Naive thymus-derived CD4-positive, alpha-beta T cell (primary cell): ENCODE measurements at regions of chr1 and their contacts with region 1.

Region 1: GRCh38 chr1:183471743-183472487 is 384 bp upstream of the SMG7 start:
- DNase-seq: peak; percentile 90 to 99 (median 96)
- ATAC-seq: peak; percentile 82
- H3K4me3 ChIP-seq: peak overlapping the region; percentile 74
- H3K4me3 Mint-ChIP-seq: peak overlapping the region; percentile 94 to 100 (median 98)
- H3K27ac ChIP-seq: peak overlapping the region; percentile 90
- H3K27ac Mint-ChIP-seq: peak overlapping the region in 8 of 9 donors; percentile 97 to 100 (median 99)
- H3K4me1 ChIP-seq: peaks cover 17 to 34% of the 10 kb centered on the region in 2 donors
- H3K4me1 Mint-ChIP-seq: peaks cover 3 to 32% (median 14%) of the 10 kb centered on the region in 7 donors
- H3K27me3 ChIP-seq: no peaks in the 10 kb centered on the region
- H3K27me3 Mint-ChIP-seq: peaks cover 0 to 7% (median 0%) of the 10 kb centered on the region in 5 donors

Region 2: GRCh38 chr1:182391362-182392044 is 1080.4 kb before region 1 on chr1 and contains the start of gene GLUL:
- CTCF ChIA-PET with region 1: no interaction called
- POLR2A ChIA-PET with region 1: no interaction called
- intact Hi-C with region 1: loop called in 1 of 2 experiments (anchors 5 kb)
- DNase-seq: peak; percentile 46 to 83 (median 63)
- ATAC-seq: peak; percentile 87
- H3K4me3 ChIP-seq: peak within 1 kb of the TSS; percentile 73
- H3K4me3 Mint-ChIP-seq: peak within 1 kb of the TSS; percentile 87 to 98 (median 94)
- H3K27ac ChIP-seq: peak within 1 kb of the TSS; percentile 64
- H3K27ac Mint-ChIP-seq: peak within 1 kb of the TSS; percentile 82 to 97 (median 89)
- H3K4me1 ChIP-seq: peaks cover 10 to 14% of the 10 kb centered on the region in 2 donors
- H3K4me1 Mint-ChIP-seq: peaks cover 17 to 45% (median 29%) of the 10 kb centered on the region in 7 donors
- H3K27me3 ChIP-seq: no peaks in the 10 kb centered on the region
- H3K27me3 Mint-ChIP-seq: peaks cover 0 to 25% (median 0%) of the 10 kb centered on the region in 5 donors
- total RNA-seq, gene GLUL: 66.2 to 357 (median 112) TPM

Region 3: GRCh38 chr1:182789138-182790076 is 682.5 kb before region 1 on chr1 and contains the start of gene NPL:
- CTCF ChIA-PET with region 1: no interaction called
- POLR2A ChIA-PET with region 1: no interaction called
- intact Hi-C with region 1: loop called in 1 of 2 experiments (anchors 1 kb)
- DNase-seq: peak; percentile 78 to 88 (median 86)
- ATAC-seq: peak; percentile 97
- H3K4me3 ChIP-seq: peak within 1 kb of the TSS; percentile 94
- H3K4me3 Mint-ChIP-seq: peak within 1 kb of the TSS; percentile 88 to 96 (median 94)
- H3K27ac ChIP-seq: peak within 1 kb of the TSS; percentile 68
- H3K27ac Mint-ChIP-seq: peak within 1 kb of the TSS; percentile 45 to 94 (median 87)
- H3K4me1 ChIP-seq: peaks cover 8 to 13% of the 10 kb centered on the region in 2 donors
- H3K4me1 Mint-ChIP-seq: peaks cover 8 to 18% (median 15%) of the 10 kb centered on the region in 7 donors
- H3K27me3 ChIP-seq: no peaks in the 10 kb centered on the region
- H3K27me3 Mint-ChIP-seq: peaks cover 0 to 38% (median 0%) of the 10 kb centered on the region in 5 donors
- total RNA-seq, gene NPL: 3.0 to 20.8 (median 9.9) TPM

Region 4: DNA sequence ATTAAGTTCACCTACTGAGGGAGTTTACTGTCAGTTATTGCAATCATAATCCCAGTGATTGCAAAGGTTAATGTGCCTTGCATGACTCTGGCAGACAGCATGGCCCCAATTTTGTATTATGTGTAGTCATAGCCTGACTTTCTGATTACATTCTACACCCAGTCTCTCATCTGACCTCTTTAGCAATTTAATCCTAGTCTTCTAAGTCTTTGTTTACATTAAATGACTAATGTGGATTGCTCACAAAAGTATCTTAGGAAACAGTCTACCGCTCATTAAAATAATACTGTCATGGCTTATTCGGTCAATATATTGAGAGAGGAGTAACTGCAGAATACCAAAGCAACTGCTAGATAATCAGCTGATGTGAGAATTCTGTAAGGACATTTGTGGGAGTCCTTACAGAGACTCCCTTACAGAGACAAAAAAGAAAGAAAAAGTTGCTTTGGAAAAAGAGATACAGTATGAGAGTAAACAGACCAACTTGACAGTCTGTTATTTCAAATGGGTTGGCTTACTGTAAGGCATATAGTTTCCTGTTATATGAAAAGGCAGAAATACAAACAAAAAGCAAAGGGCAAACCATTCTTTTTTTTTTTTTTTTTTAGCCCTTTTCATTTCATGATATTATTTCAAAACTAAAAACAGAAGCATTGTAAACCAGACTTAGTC is 43.2 kb after region 1 on chr1:
- CTCF ChIA-PET with region 1: interaction called, 3 read pairs
- POLR2A ChIA-PET with region 1: no interaction called
- intact Hi-C with region 1: loop called in 1 of 2 experiments (anchors 1 kb)
- DNase-seq: no peak
- ATAC-seq: no peak
- H3K4me3 ChIP-seq: no peak overlapping the region
- H3K4me3 Mint-ChIP-seq: no peak overlapping the region
- H3K27ac ChIP-seq: no peak overlapping the region
- H3K27ac Mint-ChIP-seq: peak overlapping the region in 4 of 9 donors; percentile 7 to 59 (median 30)
- H3K4me1 ChIP-seq: no peaks in the 10 kb centered on the region
- H3K4me1 Mint-ChIP-seq: peaks cover 12 to 31% (median 14%) of the 10 kb centered on the region in 7 donors
- H3K27me3 ChIP-seq: no peaks in the 10 kb centered on the region
- H3K27me3 Mint-ChIP-seq: no peaks in the 10 kb centered on the region

Region 5: DNA sequence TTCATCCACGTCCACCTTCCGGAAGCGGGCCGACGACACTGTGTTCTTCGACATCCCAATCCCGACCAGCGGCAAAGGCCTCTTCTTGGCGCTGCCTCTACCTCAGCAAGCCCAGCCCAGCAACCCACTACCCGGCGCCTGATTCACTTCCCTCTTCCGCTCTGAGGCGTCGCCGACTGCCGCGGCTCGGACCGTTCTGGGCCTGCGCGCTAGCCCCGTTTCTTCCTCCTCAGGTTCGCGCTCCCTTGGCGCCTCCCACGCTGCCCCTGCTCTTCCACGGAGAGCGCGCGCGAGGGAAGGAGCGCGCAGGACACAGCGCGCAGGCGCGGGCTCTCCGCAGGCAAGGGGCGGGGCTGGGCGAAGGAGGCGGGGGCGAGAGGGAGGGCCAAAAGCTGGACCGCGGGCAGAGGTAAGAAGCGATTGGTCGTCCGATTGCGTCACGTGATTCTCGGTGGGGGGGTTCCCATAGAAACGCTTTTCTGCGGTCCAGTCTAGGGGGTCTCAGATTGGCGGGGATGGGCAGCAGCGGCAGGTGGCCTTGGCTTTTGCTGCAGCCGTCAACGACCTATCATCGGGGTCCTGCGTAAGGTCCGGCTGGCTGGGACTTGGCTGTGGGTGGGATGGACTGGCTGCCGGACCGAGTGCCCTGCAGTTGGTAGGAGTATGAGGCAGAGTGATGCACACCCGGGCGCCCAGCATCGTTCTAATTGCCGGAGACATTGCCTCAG is 163.9 kb after region 1 on chr1 and contains the start of gene ARPC5:
- CTCF ChIA-PET with region 1: interaction called, 5 read pairs
- POLR2A ChIA-PET with region 1: interaction called, 10 read pairs
- intact Hi-C with region 1: loop called (anchors 1 kb)
- DNase-seq: peak; percentile 90 to 98 (median 92)
- ATAC-seq: peak; percentile 92
- H3K4me3 ChIP-seq: peak within 1 kb of the TSS; percentile 94
- H3K4me3 Mint-ChIP-seq: peak within 1 kb of the TSS; percentile 95 to 100 (median 100)
- H3K27ac ChIP-seq: peak within 1 kb of the TSS; percentile 80
- H3K27ac Mint-ChIP-seq: peak within 1 kb of the TSS; percentile 94 to 100 (median 99)
- H3K4me1 ChIP-seq: peaks cover 14 to 22% of the 10 kb centered on the region in 2 donors
- H3K4me1 Mint-ChIP-seq: peaks cover 15 to 50% (median 39%) of the 10 kb centered on the region in 7 donors
- H3K27me3 ChIP-seq: no peaks in the 10 kb centered on the region
- H3K27me3 Mint-ChIP-seq: peaks cover 0 to 27% (median 0%) of the 10 kb centered on the region in 5 donors
- total RNA-seq, gene ARPC5: 49.9 to 252 (median 105) TPM

Region 6: GRCh38 chr1:183956559-183957188 is 484.8 kb after region 1 on chr1:
- CTCF ChIA-PET with region 1: no interaction called
- POLR2A ChIA-PET with region 1: no interaction called
- intact Hi-C with region 1: loop called (anchors 2 to 5 kb)
- DNase-seq: peak in 8 of 9 donors; percentile 60 to 82 (median 71)
- ATAC-seq: peak; percentile 99
- H3K4me3 ChIP-seq: no peak overlapping the region
- H3K4me3 Mint-ChIP-seq: peak overlapping the region in 8 of 10 donors; percentile 10 to 76 (median 30)
- H3K27ac ChIP-seq: peak overlapping the region; percentile 15
- H3K27ac Mint-ChIP-seq: no peak overlapping the region
- H3K4me1 ChIP-seq: peaks cover 17 to 36% of the 10 kb centered on the region in 2 donors
- H3K4me1 Mint-ChIP-seq: peaks cover 0 to 13% (median 9%) of the 10 kb centered on the region in 7 donors
- H3K27me3 ChIP-seq: no peaks in the 10 kb centered on the region
- H3K27me3 Mint-ChIP-seq: no peaks in the 10 kb centered on the region

Region 7: GRCh38 chr1:185156854-185157598 is 1685.1 kb after region 1 on chr1 and contains the starts of genes SWT1 and TRMT1L:
- CTCF ChIA-PET with region 1: no interaction called
- POLR2A ChIA-PET with region 1: no interaction called
- intact Hi-C with region 1: loop called (anchors 2 kb)
- DNase-seq: peak; percentile 91 to 97 (median 96)
- ATAC-seq: peak; percentile 95
- H3K4me3 ChIP-seq: peak within 1 kb of the TSS; percentile 88
- H3K4me3 Mint-ChIP-seq: peak within 1 kb of the TSS; percentile 97 to 100 (median 98)
- H3K27ac ChIP-seq: peak within 1 kb of the TSS; percentile 97
- H3K27ac Mint-ChIP-seq: peak within 1 kb of the TSS; percentile 96 to 100 (median 98)
- H3K4me1 ChIP-seq: peaks cover 9 to 20% of the 10 kb centered on the region in 2 donors
- H3K4me1 Mint-ChIP-seq: peaks cover 28 to 67% (median 56%) of the 10 kb centered on the region in 7 donors
- H3K27me3 ChIP-seq: no peaks in the 10 kb centered on the region
- H3K27me3 Mint-ChIP-seq: no peaks in the 10 kb centered on the region
- total RNA-seq, gene SWT1: 4.4 to 11.5 (median 5.2) TPM
- total RNA-seq, gene TRMT1L: 11.6 to 33.9 (median 27.3) TPM